ENCODE measurements at regions of chr1 and their contacts with region 1.

Region 1: GRCh38 chr1:6245086-6245868 is 1.3 kb downstream of the HES3 start:
- DNase-seq: peak; percentile 84
- H3K4me3 Mint-ChIP-seq: no peak overlapping the region
- H3K27ac Mint-ChIP-seq: no peak overlapping the region
- H3K4me1 Mint-ChIP-seq: peaks cover 8% of the 10 kb centered on the region
- H3K27me3 Mint-ChIP-seq: peaks cover 56% of the 10 kb centered on the region

Region 2: DNA sequence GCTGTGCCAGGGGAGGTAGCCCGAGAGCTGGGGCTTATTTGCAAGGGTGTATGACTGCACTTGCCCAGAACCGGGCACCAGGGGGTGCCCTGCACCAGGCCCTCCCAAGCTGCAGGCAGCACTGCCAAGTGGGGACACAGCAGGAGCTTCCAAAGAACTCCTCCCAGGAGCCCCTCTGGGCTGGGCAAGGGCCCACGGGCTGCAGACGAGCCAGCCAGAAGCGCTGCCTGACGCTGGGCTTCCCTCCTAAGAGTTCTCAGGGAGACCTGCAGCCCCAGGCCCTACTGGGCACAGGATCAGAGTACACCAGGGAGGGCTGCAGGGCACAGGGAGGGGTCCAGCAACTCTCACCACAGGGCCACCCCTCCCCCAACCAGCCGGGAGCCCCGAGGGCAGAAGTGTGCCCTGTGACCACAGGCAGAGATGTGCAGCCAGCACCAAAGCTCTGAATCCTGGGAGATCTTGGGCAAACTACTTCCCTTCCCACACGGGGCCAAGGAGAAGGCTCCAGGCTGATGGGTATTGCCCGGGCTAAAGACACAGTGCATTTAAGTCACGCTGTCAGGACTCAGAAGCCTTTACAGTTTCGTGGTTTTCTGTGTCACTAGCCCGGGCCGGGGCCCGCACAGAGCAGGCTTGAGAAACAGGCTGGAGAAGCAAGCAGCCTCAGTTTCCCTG is 136.2 kb before region 1 on chr1:
- CTCF ChIA-PET with region 1: interaction called, 8 read pairs
- POLR2A ChIA-PET with region 1: no interaction called
- intact Hi-C with region 1: loop called (anchors 2 kb)
- DNase-seq: peak; percentile 64
- H3K4me3 Mint-ChIP-seq: no peak overlapping the region
- H3K27ac Mint-ChIP-seq: no peak overlapping the region
- H3K4me1 Mint-ChIP-seq: no peaks in the 10 kb centered on the region
- H3K27me3 Mint-ChIP-seq: peaks cover 6% of the 10 kb centered on the region

Region 3: DNA sequence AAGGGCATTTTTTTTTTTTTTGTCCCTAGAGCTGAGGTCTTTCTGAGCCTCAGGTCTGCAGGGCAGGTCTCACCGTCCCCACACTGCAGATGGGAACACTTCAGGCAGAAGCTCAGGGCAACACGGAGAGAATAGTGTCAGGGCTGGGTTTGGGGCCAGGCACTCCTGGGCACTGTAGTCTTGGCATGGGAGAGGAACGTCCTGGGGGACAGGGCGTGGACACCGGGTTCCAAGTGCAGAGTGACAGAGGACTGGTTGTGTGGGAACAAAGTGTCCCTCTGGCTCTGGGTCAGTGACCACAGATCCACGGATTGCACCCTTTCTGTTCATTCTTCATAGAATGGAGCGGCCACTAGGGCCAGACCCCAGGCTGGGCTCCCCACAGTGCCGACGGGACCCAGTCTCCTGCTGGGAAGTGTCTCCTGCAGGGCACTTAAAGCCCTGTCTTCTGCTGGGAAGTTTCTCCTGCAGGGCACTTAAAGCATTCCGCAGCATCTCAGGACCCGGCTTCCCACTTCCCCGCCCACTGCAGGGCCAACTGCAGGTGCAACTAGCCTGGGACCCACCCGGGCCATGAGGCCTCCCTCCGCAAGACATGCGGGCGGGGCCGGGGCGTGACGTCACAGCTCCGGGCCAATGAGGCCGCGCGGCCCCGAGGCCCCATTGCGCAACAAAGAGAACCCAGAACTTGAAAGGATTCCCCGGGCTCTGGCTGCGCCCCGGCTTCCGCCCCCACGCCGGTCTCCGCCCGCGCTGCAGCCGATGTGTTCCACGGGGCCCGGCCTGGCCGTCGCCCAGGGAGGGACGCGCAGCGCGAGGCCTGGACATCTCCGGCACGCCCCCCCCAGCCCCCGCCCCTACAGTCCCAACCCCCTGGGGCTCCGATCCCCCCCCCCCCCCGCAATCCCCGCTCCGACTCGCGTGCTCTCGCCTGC is 14.5 kb after region 1 on chr1:
- CTCF ChIA-PET with region 1: interaction called, 27 read pairs
- POLR2A ChIA-PET with region 1: no interaction called
- intact Hi-C with region 1: no loop called
- DNase-seq: peak; percentile 79
- H3K4me3 Mint-ChIP-seq: peak overlapping the region; percentile 12
- H3K27ac Mint-ChIP-seq: no peak overlapping the region
- H3K4me1 Mint-ChIP-seq: peaks cover 6% of the 10 kb centered on the region
- H3K27me3 Mint-ChIP-seq: peaks cover 17% of the 10 kb centered on the region

Region 4: GRCh38 chr1:6393400-6394187 is 148.3 kb after region 1 on chr1 and contains the start of gene ACOT7:
- CTCF ChIA-PET with region 1: interaction called, 15 read pairs
- POLR2A ChIA-PET with region 1: interaction called, 3 read pairs
- intact Hi-C with region 1: no loop called
- DNase-seq: peak; percentile 93
- H3K4me3 Mint-ChIP-seq: peak within 1 kb of the TSS; percentile 84
- H3K27ac Mint-ChIP-seq: peak within 1 kb of the TSS; percentile 88
- H3K4me1 Mint-ChIP-seq: peaks cover 20% of the 10 kb centered on the region
- H3K27me3 Mint-ChIP-seq: no peaks in the 10 kb centered on the region
- total RNA-seq, gene ACOT7: 93.8 to 94.6 TPM

Region 5: GRCh38 chr1:6408023-6408422 is 162.7 kb after region 1 on chr1:
- CTCF ChIA-PET with region 1: interaction called, 56 read pairs
- POLR2A ChIA-PET with region 1: no interaction called
- intact Hi-C with region 1: loop called (anchors 1 kb)
- DNase-seq: no peak
- H3K4me3 Mint-ChIP-seq: no peak overlapping the region
- H3K27ac Mint-ChIP-seq: no peak overlapping the region
- H3K4me1 Mint-ChIP-seq: peaks cover 3% of the 10 kb centered on the region
- H3K27me3 Mint-ChIP-seq: peaks cover 6% of the 10 kb centered on the region

Region 6: DNA sequence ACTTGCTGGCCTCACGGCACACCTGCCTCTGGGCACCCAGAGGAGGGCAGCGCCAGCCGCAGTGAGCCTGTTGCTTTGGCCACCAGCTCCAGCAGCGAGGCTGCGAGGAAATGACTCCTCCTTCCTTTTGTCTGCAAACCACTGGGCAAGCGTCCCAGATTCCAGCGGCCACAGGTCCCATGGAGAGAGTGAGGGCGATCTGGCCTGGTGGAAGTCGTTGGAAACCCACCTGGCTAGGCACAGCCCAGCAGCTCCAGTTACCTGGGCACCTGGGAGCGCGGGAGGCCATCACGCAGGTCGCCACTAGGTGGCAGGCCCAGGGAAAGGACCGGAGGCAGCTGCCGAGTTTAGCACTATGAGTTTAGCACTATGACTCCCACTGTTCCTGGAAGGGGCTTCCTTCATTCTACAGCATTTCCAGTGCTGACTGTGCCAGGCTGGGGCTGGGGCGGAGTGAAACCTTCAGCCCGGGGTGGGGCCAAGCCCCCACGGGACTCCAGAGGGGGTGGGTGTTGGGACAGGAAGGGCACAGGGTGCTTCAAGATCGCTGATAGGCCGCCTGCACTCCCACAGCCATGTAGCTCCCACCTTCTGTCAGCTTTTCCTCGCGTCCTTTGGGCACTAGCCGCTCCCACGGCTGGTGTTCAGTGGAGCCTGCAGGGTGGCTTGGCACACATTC is 178.2 kb after region 1 on chr1:
- CTCF ChIA-PET with region 1: interaction called, 60 read pairs
- POLR2A ChIA-PET with region 1: no interaction called
- intact Hi-C with region 1: loop called (anchors 5 kb)
- DNase-seq: peak; percentile 83
- H3K4me3 Mint-ChIP-seq: peak overlapping the region; percentile 20
- H3K27ac Mint-ChIP-seq: no peak overlapping the region
- H3K4me1 Mint-ChIP-seq: peaks cover 17% of the 10 kb centered on the region
- H3K27me3 Mint-ChIP-seq: peaks cover 41% of the 10 kb centered on the region

Region 7: DNA sequence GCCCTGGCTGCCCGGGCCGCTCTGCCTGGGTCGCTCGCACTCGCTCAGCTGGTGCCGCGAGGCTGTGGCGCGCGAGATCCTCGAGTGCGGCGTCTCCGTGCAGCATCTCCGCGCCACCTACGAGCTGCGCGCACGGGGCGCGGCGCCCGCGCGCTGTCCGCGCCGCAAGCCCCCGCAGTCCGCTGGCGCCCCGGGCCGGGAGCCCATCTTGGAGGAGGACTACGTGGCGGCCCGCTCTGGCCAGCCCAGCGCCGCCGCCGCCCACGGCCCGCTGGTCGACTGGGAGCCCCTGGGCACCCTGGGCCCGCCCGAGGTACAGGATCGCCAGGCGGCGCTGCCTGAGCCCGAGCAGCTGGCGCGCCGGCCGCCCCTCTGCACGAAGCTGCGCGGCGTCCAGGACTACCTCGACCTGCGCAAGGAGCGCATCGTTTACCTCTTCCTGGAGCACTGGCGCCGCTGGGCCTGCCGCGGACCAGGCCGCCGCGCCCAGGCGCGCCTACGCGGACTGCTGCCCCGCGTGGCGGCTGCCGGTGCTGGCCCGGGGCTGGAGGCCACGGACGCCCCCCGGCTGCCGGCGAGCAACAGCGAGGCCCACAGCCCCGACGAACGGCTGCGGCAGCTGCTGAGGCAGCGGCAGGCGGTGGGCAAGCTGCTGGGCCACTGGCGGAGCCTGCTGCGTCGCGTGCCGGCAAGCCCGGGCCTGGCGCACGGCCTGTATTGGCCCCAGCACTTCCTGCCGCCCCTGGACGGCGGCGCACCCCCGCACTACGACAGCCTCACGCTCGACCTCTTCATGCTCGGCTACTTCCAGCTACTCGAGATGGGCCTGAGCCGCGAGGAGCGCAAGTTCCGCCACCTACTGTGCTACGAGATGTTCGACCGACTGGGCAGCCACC is 209.8 kb after region 1 on chr1:
- CTCF ChIA-PET with region 1: interaction called, 11 read pairs
- POLR2A ChIA-PET with region 1: no interaction called
- intact Hi-C with region 1: no loop called
- DNase-seq: peak; percentile 49
- H3K4me3 Mint-ChIP-seq: no peak overlapping the region
- H3K27ac Mint-ChIP-seq: no peak overlapping the region
- H3K4me1 Mint-ChIP-seq: peaks cover 18% of the 10 kb centered on the region
- H3K27me3 Mint-ChIP-seq: peaks cover 25% of the 10 kb centered on the region

Region 8: DNA sequence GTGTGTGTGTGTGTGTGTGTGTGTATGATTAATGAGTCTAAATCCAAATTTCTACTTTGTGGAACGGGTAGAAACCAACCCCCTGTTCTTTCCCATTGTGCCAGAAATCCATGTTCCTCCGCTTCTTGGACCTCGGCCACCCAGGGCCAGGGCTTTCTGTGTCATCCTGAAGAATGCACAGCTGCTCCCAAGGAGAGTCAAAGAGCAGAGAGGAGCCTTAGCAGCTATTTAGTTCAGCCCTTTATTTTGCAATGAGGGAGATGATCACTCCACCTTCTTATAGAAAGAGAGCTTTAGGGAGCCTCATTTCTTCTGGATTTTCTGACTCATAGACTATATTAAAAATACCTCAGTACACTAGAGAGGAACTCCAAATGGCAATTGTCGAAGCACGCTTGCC is 1036.5 kb after region 1 on chr1:
- CTCF ChIA-PET with region 1: no interaction called
- POLR2A ChIA-PET with region 1: no interaction called
- intact Hi-C with region 1: no loop called
- DNase-seq: no peak
- H3K4me3 Mint-ChIP-seq: no peak overlapping the region
- H3K27ac Mint-ChIP-seq: no peak overlapping the region
- H3K4me1 Mint-ChIP-seq: no peaks in the 10 kb centered on the region
- H3K27me3 Mint-ChIP-seq: peaks cover 21% of the 10 kb centered on the region